ENCODE measurements at regions of chr17 and their contacts with region 1.

Region 1: DNA sequence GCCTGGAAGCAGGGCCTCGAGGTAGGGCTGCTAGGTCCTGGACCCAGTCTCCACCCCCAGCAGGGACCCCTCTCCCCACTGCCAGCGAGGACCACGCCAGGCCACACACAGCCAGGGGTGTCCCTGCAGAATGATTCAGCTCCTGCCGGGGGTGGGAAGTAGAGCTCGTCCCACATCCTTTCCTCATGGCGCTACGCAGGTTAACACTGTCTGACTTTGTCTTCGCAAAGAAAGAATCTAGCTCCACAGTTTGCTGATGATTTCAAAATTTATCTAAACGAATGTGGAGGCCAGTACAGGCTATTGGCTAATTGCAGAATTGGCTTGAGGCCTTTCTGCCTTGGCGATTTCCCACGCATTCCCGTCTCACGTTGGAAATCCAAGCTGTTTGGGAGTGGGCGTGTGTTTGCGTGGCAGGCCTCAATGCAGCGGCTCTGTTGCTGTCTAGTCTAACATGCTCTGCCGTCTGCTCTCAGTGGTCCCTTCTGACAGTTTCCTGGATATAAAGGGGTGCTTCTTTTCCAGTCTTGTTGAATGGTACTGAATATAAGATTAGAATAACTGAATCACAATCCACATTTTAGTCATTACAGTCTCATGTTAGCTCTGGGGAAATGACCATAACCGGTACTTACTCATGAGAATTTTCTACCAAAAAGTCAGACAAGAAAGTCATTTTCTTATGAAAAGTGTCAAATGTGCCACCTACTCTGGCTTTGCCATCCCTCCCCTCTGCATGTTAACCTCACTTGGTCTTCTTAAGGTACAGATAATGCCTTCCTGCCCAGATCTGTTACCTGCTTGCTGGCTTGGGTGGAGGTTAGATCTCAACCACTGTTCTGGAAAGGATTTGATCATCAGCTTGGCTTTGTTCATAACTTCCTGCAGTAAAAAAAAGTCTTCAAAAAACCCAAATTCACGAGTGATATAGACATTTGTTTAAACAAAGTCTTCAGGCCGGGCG is 252.4 kb downstream of the NTN1 start:
- DNase-seq: peak in 6 of 10 donors; percentile 36 to 61 (median 48)
- H3K4me3 ChIP-seq: no peak overlapping the region
- H3K27ac ChIP-seq: peak overlapping the region in 1 of 59 donors; percentile 20
- H3K27me3 ChIP-seq: no peaks in the 10 kb centered on the region
- CTCF ChIP-seq: no peak

Region 2: GRCh38 chr17:9475101-9475658 is 201.5 kb after region 1 on chr17:
- intact Hi-C with region 1: loop called (anchors 5 to 10 kb)
- DNase-seq: peak in 9 of 10 donors; percentile 48 to 87 (median 78)
- H3K4me3 ChIP-seq: peak overlapping the region in 2 of 59 donors; percentile 12 to 17
- H3K27ac ChIP-seq: peak overlapping the region in 3 of 59 donors; percentile 30 to 77 (median 64)
- H3K27me3 ChIP-seq: no peaks in the 10 kb centered on the region
- CTCF ChIP-seq: peak in 12 of 56 donors; percentile 7 to 46 (median 23)